OCI-LY7 (cell line): ENCODE measurements at regions of chr7 and their contacts with region 1.

Region 1: DNA sequence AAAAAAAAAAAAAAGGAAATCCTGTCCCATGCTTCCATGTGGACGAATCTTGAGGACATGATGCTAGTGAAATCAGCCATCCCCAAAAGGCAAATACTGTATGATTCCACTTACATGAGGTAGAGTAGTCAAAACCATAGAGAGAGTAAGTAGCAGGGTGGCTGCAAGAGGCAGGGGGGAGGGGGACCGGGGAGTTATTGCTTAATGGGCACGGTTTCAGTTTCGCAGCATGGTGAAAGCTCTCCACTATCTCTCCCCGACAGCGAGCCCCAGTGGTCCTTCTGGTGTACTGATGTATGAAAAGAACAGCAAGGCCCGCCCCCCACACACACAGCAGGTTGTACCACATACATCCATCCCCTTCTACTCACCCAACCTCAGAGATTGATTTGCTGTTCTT is 32.8 kb downstream of the NOD1 start:
- DNase-seq: peak; percentile 93
- H3K4me3 ChIP-seq: no peak overlapping the region
- H3K27ac ChIP-seq: no peak overlapping the region
- H3K4me1 ChIP-seq: peaks cover 11% of the 10 kb centered on the region
- CTCF ChIP-seq: peak; percentile 78

Region 2: GRCh38 chr7:30396389-30396788 is 49.4 kb before region 1 on chr7:
- CTCF ChIA-PET with region 1: interaction called, 3 read pairs
- POLR2A ChIA-PET with region 1: no interaction called
- intact Hi-C with region 1: loop called (anchors 5 kb)
- DNase-seq: peak; percentile 54
- H3K4me3 ChIP-seq: no peak overlapping the region
- H3K27ac ChIP-seq: no peak overlapping the region
- H3K4me1 ChIP-seq: peaks cover 3% of the 10 kb centered on the region
- CTCF ChIP-seq: peak; percentile 78